ENCODE measurements at regions of chr1 and their contacts with region 1.

Region 1: GRCh38 chr1:230109895-230110667 is 43.0 kb downstream of the GALNT2 start:
- DNase-seq: peak; percentile 95
- H3K4me3 Mint-ChIP-seq: peak overlapping the region; percentile 27
- H3K27ac Mint-ChIP-seq: peak overlapping the region; percentile 95
- H3K4me1 Mint-ChIP-seq: peaks cover 90% of the 10 kb centered on the region
- H3K27me3 Mint-ChIP-seq: no peaks in the 10 kb centered on the region

Region 2: GRCh38 chr1:229694053-229694693 is 415.9 kb before region 1 on chr1:
- CTCF ChIA-PET with region 1: no interaction called
- intact Hi-C with region 1: loop called (anchors 1 kb)
- DNase-seq: no peak
- H3K4me3 Mint-ChIP-seq: no peak overlapping the region
- H3K27ac Mint-ChIP-seq: no peak overlapping the region
- H3K4me1 Mint-ChIP-seq: peaks cover 12% of the 10 kb centered on the region
- H3K27me3 Mint-ChIP-seq: peaks cover 9% of the 10 kb centered on the region

Region 3: DNA sequence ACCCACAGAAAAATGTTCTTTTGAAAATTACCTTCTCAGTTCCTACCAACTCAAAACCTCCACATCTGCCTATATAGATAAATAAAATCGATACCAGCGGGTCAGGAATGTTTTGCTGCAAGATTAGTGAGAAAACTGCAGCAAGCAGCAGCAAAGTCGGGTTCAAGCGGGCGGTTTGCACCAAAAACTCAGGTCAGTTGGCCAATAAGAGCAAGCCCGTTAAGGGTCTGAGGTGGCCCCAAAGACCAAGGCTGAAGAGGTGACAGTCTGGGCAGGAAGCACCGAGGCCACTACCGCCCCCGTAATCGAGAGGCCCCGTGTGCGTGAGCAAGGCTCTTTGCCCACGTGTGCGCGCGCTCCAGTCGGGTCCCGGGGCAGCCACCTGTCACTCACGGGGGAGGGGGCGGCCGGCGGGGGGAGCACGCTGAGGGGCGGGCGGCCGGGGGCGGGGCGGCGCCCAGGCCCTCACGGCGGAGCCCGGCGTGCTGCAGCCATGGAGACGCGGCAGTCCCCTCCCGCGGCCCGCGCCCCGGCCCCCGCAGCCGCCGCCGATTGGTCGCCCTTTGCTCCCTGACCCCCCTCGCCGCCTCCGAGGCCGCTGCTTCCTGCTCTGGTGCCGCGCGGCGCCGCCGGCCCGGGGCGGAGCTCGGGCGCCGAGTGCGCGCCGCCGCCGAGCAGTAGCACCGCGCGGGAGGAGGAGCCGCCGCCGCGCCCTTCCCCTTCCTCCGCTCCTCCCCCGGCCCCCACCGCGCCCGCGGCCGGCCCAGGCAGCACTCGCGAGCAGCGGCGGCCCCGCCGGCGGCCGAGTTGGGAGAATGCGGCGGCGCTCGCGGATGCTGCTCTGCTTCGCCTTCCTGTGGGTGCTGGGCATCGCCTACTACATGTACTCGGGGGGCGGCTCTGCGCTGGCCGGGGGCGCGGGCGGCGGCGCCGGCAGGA is 43.3 kb before region 1 on chr1 and contains the start of gene GALNT2:
- CTCF ChIA-PET with region 1: interaction called, 5 read pairs
- intact Hi-C with region 1: loop called (anchors 1 kb)
- DNase-seq: peak; percentile 89
- H3K4me3 Mint-ChIP-seq: peak within 1 kb of the TSS; percentile 88
- H3K27ac Mint-ChIP-seq: peak within 1 kb of the TSS; percentile 83
- H3K4me1 Mint-ChIP-seq: peaks cover 44% of the 10 kb centered on the region
- H3K27me3 Mint-ChIP-seq: no peaks in the 10 kb centered on the region
- total RNA-seq, gene GALNT2: 59.8 to 62.4 TPM

Region 4: DNA sequence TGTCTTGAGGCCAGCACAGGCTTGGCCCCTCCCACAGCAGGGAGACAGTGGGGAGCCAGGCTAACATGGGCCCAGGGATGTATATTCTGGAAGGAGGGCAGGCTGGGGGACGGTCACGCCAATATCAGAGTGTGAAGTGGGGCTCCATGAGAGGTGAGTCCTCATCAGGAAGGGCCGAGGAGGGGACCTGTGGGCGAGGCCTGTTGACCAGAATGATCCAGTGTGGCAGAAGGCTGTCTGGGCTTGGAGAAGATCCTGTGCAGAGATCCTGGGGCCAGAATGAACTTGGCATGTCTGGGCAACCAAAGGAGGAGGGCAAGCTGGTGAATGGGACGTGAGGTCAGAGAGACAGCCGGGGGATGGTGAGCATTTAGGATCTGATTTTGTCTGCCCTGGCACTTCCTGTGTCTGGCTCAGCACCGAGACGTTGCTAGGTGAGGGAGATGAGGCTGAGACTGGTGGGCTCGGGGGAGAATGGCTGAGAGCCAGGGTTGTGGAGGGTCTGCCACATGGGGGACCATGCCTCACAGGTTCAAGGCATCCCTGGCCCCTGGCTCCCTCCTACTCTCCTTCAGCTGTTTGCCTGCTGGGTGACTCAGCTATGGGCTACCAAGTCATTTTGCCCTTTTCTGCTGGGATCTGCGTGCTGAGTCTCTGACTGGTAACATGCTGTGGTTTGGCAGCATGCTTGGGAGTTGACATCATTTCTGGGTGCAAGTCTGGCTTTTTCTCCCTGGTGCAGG is 25.8 kb before region 1 on chr1:
- CTCF ChIA-PET with region 1: interaction called, 15 read pairs
- intact Hi-C with region 1: loop called (anchors 1 kb)
- DNase-seq: peak; percentile 91
- H3K4me3 Mint-ChIP-seq: peak overlapping the region; percentile 39
- H3K27ac Mint-ChIP-seq: peak overlapping the region; percentile 82
- H3K4me1 Mint-ChIP-seq: peaks cover 68% of the 10 kb centered on the region
- H3K27me3 Mint-ChIP-seq: no peaks in the 10 kb centered on the region

Region 5: GRCh38 chr1:230167419-230167852 is 57.4 kb after region 1 on chr1:
- CTCF ChIA-PET with region 1: interaction called, 15 read pairs
- intact Hi-C with region 1: loop called (anchors 1 kb)
- DNase-seq: peak; percentile 58
- H3K4me3 Mint-ChIP-seq: no peak overlapping the region
- H3K27ac Mint-ChIP-seq: peak overlapping the region; percentile 50
- H3K4me1 Mint-ChIP-seq: peaks cover 55% of the 10 kb centered on the region
- H3K27me3 Mint-ChIP-seq: no peaks in the 10 kb centered on the region

Region 6: GRCh38 chr1:230310381-230311163 is 200.5 kb after region 1 on chr1:
- CTCF ChIA-PET with region 1: no interaction called
- intact Hi-C with region 1: loop called (anchors 1 kb)
- DNase-seq: peak; percentile 75
- H3K4me3 Mint-ChIP-seq: no peak overlapping the region
- H3K27ac Mint-ChIP-seq: no peak overlapping the region
- H3K4me1 Mint-ChIP-seq: peaks cover 10% of the 10 kb centered on the region
- H3K27me3 Mint-ChIP-seq: peaks cover 4% of the 10 kb centered on the region

Region 7: GRCh38 chr1:230696722-230697437 is 586.8 kb after region 1 on chr1:
- CTCF ChIA-PET with region 1: no interaction called
- intact Hi-C with region 1: no loop called
- DNase-seq: no peak
- H3K4me3 Mint-ChIP-seq: no peak overlapping the region
- H3K27ac Mint-ChIP-seq: no peak overlapping the region
- H3K4me1 Mint-ChIP-seq: no peaks in the 10 kb centered on the region
- H3K27me3 Mint-ChIP-seq: no peaks in the 10 kb centered on the region